A549 (cell line): ENCODE measurements at regions of chr1 and their contacts with region 1.

Region 1: DNA sequence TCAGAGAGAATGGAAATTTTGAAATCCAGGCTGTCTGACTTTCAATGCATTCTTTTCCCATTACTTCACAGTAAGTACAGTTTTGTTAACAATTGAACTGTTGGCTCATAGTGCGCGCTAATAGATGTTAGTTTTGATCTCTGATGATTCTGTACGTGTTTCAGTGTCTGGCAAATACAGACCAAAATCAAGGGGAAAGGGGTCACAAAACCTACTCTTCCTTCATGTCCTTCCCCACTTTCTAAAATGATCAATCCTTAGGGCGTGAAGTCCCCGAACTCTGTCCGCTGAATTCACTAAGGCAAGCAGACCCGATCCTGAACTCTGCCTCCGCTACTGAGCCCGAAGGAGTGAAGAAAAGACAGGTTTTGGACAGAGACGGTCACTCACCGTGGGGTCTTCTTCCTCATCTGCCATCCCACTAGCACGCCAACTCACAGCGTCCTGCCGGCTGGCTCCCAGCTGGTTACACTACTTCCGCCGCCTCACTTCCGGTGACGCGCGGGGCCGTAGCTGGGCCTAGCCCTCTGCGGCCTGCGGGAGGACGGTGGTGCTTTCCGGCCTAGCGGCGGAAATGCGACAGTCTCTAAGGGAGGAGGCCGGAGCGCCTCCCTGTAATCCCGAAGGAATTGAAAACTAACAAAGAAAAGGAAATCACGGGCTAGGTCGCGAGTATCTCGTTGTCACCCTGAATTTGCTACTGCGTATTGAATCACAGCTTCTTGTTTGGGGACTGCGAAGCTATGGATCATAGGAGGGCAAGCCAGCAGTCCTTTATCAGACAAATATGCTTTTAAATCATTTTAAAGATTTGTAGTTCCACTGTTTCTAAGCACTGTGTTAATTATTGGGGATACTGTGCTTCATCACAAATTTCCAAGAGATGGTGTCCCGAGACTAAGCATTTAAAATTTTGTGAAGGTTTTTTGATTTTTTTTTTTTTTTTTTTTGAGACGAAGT is at the start of gene TAF13:
- DNase-seq: peak; percentile 80 to 93
- ATAC-seq: peak; percentile 100
- H3K4me3 ChIP-seq: peak within 1 kb of the TSS; percentile 72
- H3K27ac ChIP-seq: peak within 1 kb of the TSS; percentile 90 to 93
- H3K4me1 ChIP-seq: no peaks in the 10 kb centered on the region; the same call in 2 of the 3 replicates
- CTCF ChIP-seq: no peak
- EP300 ChIP-seq: no peak
- POLR2A ChIP-seq: peak; percentile 93
- RAD21 ChIP-seq: no peak
- polyA plus RNA-seq, gene TAF13: 29.0 and 50.5 TPM in 2 replicates

Region 2: DNA sequence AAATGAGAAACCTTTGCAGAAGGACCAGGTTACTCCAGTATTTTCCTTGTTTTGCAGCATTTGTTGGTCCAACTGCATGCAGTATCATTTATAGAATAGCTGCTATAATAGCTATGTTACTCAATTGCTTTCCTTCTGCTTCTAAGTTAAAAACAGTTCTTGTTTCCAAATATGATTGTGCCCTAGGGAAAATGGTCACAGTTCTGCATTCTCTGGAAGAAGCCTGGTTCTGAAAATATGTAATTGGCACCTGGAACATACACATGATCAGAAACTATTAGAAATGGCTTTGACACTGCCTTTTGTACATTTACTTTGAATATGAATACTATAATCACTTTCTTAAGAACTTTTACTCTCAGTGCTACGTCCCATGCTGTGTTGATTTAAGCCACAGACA is 448.6 kb before region 1 on chr1:
- CTCF ChIA-PET with region 1: no interaction called
- POLR2A ChIA-PET with region 1: no interaction called
- DNase-seq: no peak
- ATAC-seq: no peak
- H3K4me3 ChIP-seq: no peak overlapping the region
- H3K27ac ChIP-seq: no peak overlapping the region
- H3K4me1 ChIP-seq: no peaks in the 10 kb centered on the region
- CTCF ChIP-seq: no peak
- EP300 ChIP-seq: no peak
- POLR2A ChIP-seq: no peak
- RAD21 ChIP-seq: no peak

Region 3: DNA sequence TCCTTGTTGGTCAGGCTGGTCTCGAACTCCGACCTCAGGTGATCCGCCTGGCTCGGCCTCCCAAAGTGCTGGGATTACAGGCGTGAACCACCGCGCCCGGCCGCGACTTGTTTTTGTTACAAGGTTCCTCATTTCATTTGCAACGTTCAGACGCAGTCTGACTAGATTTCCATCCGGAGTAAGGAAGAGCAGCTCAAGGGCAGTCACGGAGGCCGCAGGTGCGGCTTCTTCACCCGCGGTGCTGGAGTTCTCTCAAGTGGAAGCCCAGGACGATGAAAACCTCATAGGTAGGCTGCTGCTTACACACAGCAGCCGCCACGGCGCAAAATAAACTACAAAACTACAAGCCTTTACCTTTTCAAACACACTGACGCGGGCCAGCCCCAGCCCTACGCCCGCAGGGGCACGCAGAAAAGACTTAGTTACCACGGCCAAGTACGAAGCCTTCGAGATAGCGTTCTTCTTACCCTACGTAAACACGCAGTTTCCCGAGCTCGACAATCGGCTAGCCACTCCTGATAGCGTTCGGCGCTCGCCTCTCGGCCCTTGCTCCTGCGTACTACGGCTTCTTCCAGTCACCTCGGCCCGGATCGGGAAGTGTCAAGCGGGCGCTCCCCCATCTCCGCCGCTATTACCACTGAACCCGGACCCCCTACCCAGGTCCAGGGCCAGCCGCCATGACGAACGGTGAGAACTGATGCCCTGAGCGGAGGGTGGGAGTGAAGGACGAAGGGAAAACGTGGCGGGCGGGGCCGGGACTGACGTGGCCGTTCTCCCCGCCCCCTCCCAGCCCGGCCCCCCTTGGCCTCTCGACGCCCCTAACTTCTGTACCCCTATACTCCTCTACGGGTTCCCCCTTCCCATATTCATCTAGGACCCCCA is 14.6 kb after region 1 on chr1 and contains the start of gene TMEM167B:
- CTCF ChIA-PET with region 1: interaction called, 13 read pairs
- POLR2A ChIA-PET with region 1: interaction called, 10 read pairs
- DNase-seq: peak; percentile 62 to 93
- ATAC-seq: peak; percentile 92 to 94
- H3K4me3 ChIP-seq: peak within 1 kb of the TSS; percentile 78
- H3K27ac ChIP-seq: peak within 1 kb of the TSS; percentile 95
- H3K4me1 ChIP-seq: peaks cover 12% of the 10 kb centered on the region
- CTCF ChIP-seq: no peak
- EP300 ChIP-seq: no peak
- POLR2A ChIP-seq: peak; percentile 41
- RAD21 ChIP-seq: no peak
- polyA plus RNA-seq, gene TMEM167B: 10.9 and 13.2 TPM in 2 replicates

Region 4: DNA sequence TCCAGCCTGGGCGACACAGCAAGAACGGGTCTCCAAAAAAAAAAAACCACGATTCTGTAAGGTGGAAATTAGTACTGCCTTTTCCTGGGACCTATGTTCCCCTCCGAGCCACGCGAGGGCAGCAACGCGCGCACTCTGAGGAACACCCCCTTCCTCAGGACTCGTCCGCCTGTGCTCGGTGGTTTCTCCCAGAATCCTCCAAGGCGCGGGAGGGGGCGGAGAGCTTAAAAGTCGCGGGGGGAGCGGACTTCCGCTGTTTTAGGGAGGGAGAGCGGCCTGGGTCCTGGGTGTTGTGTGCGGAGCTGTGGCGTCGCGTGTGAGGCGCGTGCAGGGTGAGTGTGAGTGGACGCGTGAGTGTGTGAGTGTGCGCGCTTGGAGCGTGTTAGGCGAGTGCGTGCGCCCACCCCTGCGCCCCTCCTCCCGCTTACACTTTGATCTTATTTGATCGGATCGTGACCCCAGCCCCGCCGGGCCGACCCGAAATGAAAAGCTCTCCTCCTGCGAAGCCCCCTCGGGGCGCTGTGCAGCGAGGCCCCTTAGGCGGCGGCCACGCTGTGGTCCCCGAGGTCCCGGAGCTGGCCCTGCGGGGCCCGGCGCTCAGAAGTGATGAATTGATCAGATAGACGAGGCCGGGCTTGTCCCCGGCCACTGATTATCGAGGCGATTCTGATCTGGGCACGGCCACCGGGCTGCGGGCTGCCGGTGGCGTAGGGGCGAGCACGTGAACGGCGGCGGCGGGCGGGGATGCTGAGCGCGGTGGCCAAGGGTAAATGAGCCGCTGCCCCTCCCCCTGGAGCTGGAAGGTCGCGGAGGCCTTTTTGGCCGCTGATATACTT is 24.3 kb after region 1 on chr1:
- CTCF ChIA-PET with region 1: interaction called, 10 read pairs
- POLR2A ChIA-PET with region 1: interaction called, 20 read pairs
- DNase-seq: peak; percentile 80 to 97
- ATAC-seq: peak; percentile 97 to 98
- H3K4me3 ChIP-seq: peak overlapping the region; percentile 93
- H3K27ac ChIP-seq: peak overlapping the region; percentile 93 to 94
- H3K4me1 ChIP-seq: peaks cover 9% of the 10 kb centered on the region
- CTCF ChIP-seq: peak; percentile 62
- EP300 ChIP-seq: no peak
- POLR2A ChIP-seq: peak; percentile 98
- RAD21 ChIP-seq: peak; percentile 36 to 53; a peak in 4 of 5 replicates